GM12878 (cell line): ENCODE measurements at regions of chr6 and their contacts with region 1.

Region 1: GRCh38 chr6:149513915-149514314 is 29.1 kb upstream of the ZC3H12D start:
- DNase-seq: no peak
- ATAC-seq: no peak
- H3K4me3 ChIP-seq: no peak overlapping the region
- H3K27ac ChIP-seq: no peak overlapping the region
- H3K4me1 ChIP-seq: no peaks in the 10 kb centered on the region
- H3K27me3 ChIP-seq: no peaks in the 10 kb centered on the region
- CTCF ChIP-seq: no peak
- EP300 ChIP-seq: no peak
- POLR2A ChIP-seq: no peak
- RAD21 ChIP-seq: no peak

Region 2: DNA sequence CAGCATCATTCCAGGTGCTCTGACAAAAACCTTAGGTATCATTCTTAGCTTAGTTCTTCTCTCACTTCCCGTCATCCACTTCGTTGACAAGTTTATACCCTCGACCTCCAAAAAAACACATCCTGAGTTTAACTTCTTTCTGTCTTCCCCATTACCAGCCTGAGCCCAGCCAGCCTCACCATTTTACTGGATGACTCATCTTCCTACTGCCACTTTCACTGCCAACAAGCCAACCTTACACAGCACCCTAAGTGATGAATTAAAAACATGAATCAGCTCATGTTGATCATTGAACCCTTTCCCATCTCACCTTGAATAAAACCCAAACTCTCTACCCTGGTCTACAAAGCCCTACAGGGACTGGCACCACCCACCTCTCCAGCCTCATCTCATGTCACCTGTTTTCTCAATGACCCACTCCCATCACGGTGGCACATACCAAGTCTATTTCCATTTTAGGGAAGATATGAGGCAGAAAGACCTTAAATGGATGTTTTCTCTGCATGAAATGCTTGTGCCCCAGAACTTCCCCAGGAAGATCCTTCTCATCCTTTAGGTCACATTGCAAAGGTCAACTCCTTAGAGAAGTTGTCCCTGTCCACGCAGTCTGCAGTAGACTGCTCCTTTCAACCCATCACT is 777.0 kb before region 1 on chr6:
- CTCF ChIA-PET with region 1: no interaction called
- POLR2A ChIA-PET with region 1: no interaction called
- RAD21 ChIA-PET with region 1: no interaction called
- SMC1A ChIA-PET with region 1: no interaction called
- in situ Hi-C with region 1: no loop called
- intact Hi-C with region 1: no loop called
- DNase-seq: no peak
- ATAC-seq: peak; percentile 64
- H3K4me3 ChIP-seq: no peak overlapping the region
- H3K27ac ChIP-seq: no peak overlapping the region
- H3K4me1 ChIP-seq: no peaks in the 10 kb centered on the region
- H3K27me3 ChIP-seq: peaks cover 0 to 2% of the 10 kb centered on the region in 2 experiments; a peak in 3 of 4 replicates
- CTCF ChIP-seq: no peak
- EP300 ChIP-seq: no peak
- POLR2A ChIP-seq: no peak
- RAD21 ChIP-seq: no peak

Region 3: DNA sequence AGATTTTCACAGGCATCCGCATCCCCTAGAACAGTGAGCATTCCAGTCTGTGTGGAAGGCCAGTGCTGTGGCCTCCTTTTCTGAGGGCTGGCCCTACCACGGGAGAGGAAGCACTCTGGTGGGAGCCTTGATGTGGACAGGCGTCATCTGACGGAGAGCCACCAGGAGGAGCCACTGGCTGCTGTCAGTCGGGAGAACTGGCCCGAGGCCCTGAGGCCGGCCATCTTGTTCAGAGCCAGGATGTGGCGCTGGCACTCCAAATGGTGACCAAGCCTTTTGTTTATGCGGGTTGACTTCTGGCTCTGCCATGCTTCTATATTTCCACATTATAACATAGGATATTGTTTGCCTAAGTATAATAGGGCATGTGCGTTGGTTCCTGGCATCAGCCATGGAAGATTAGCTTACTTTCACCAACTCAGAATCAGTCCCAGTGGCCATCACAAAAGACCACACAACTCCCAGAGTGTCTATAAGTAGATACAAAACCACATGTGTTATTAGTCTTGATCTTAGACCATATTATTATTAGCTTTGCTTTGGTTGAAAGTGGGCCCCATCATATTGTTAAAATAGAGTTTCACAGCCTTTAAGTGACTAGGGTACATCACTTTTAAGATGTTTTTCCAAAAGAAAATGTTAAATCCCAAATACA is 470.3 kb before region 1 on chr6:
- CTCF ChIA-PET with region 1: interaction called, 9 read pairs
- POLR2A ChIA-PET with region 1: no interaction called
- RAD21 ChIA-PET with region 1: interaction called, 5 read pairs
- SMC1A ChIA-PET with region 1: interaction called, 11 read pairs
- in situ Hi-C with region 1: no loop called
- intact Hi-C with region 1: no loop called
- DNase-seq: no peak
- ATAC-seq: peak; percentile 43
- H3K4me3 ChIP-seq: no peak overlapping the region
- H3K27ac ChIP-seq: no peak overlapping the region
- H3K4me1 ChIP-seq: peaks cover 46% of the 10 kb centered on the region
- H3K27me3 ChIP-seq: no peaks in the 10 kb centered on the region
- CTCF ChIP-seq: peak; percentile 45 to 62 (median 45)
- EP300 ChIP-seq: no peak
- POLR2A ChIP-seq: no peak
- RAD21 ChIP-seq: peak; percentile 53; the same call in 1 of the 2 replicates

Region 4: GRCh38 chr6:149423964-149424440 is 89.9 kb before region 1 on chr6:
- CTCF ChIA-PET with region 1: interaction called, 6 read pairs
- POLR2A ChIA-PET with region 1: no interaction called
- RAD21 ChIA-PET with region 1: interaction called, 3 read pairs
- SMC1A ChIA-PET with region 1: interaction called, 18 read pairs
- in situ Hi-C with region 1: no loop called
- intact Hi-C with region 1: no loop called
- DNase-seq: no peak
- ATAC-seq: no peak
- H3K4me3 ChIP-seq: no peak overlapping the region
- H3K27ac ChIP-seq: no peak overlapping the region
- H3K4me1 ChIP-seq: peaks cover 11% of the 10 kb centered on the region
- H3K27me3 ChIP-seq: no peaks in the 10 kb centered on the region; a peak in 1 of 4 replicates
- CTCF ChIP-seq: no peak
- EP300 ChIP-seq: no peak
- POLR2A ChIP-seq: no peak
- RAD21 ChIP-seq: no peak

Region 5: DNA sequence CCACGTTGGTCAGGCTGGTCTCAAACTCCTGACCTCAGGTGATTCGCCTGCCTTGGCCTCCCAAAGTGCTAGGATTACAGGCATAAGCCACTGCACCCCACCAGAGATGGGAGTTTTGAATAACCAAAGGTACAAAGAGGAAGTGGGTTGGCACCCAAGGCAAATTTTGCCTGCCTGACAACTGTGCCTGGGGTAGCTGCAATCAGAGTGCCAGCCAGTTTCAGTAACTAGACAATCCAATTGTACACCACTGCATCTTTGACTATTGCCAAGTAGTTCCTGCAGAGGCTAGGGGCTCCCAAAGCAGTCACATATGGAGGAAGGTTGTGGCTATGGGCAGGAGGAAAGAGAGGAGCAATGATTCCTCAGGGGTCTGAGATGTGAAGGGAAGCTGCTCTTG is 45.7 kb before region 1 on chr6:
- CTCF ChIA-PET with region 1: interaction called, 50 read pairs
- POLR2A ChIA-PET with region 1: interaction called, 3 read pairs
- RAD21 ChIA-PET with region 1: interaction called, 28 read pairs
- SMC1A ChIA-PET with region 1: interaction called, 42 read pairs
- in situ Hi-C with region 1: no loop called
- intact Hi-C with region 1: loop called (anchors 2 kb)
- DNase-seq: no peak
- ATAC-seq: peak; percentile 43
- H3K4me3 ChIP-seq: peak overlapping the region; percentile 60
- H3K27ac ChIP-seq: peak overlapping the region; percentile 85
- H3K4me1 ChIP-seq: peaks cover 85% of the 10 kb centered on the region
- H3K27me3 ChIP-seq: no peaks in the 10 kb centered on the region
- CTCF ChIP-seq: no peak
- EP300 ChIP-seq: no peak
- POLR2A ChIP-seq: no peak
- RAD21 ChIP-seq: no peak

Region 6: DNA sequence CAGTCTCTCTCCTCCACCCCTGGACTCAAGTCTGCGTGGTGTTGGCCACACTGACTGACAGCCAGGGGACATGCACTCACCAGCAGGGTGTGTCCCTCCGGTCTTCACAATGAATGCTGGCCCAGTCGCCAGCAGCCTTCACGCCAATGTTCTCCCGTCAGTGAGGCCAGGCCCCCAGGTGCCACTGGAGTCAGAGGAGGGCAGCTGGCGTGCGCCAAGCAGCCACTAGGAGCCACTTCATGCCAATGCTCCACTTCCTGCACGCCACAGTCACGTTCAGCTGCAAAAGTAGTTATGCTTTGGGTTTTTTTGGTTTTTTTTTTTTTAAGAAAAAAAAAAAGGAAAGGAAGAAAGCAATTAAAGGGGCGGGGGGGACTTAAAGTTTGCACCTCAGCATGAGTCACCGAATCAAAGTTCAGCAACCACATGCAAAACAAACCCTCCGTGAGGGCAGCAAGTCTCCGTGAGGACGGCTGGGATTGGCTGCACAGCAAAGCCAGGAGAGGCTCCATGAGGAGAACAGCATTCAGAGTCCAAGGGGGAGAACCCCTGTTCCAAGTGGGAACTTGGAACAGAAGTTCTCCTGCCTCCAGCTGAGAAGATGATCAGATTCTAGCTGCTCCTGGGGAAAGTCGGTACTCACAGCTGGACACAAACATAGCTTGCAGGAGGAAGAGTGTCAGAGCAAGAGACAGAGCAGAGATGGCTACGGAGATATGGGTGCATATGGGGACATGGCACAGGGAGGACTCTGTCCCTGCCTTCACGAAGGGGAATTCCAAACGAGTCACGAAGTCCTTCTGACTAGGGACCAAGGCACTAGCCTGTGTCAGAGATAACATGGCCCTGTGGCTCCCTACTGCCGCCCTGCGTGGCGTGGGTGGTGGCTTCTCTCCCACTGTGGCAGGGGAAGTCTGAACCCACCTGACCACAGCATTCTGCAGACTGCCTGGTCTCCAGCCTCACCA is 28.9 kb before region 1 on chr6 and contains the start of gene ZC3H12D:
- CTCF ChIA-PET with region 1: interaction called, 27 read pairs
- POLR2A ChIA-PET with region 1: interaction called, 6 read pairs
- RAD21 ChIA-PET with region 1: interaction called, 36 read pairs
- SMC1A ChIA-PET with region 1: interaction called, 7 read pairs
- in situ Hi-C with region 1: no loop called
- intact Hi-C with region 1: loop called (anchors 1 kb)
- DNase-seq: no peak
- ATAC-seq: peak; percentile 65
- H3K4me3 ChIP-seq: peak within 1 kb of the TSS; percentile 71
- H3K27ac ChIP-seq: peak within 1 kb of the TSS; percentile 95
- H3K4me1 ChIP-seq: peaks cover 41% of the 10 kb centered on the region
- H3K27me3 ChIP-seq: no peaks in the 10 kb centered on the region
- CTCF ChIP-seq: peak; percentile 55 to 61 (median 56)
- EP300 ChIP-seq: peak; percentile 37 to 74; a peak in 3 of 4 replicates
- POLR2A ChIP-seq: peak; percentile 70
- RAD21 ChIP-seq: peak; percentile 45
- polyA plus RNA-seq, gene ZC3H12D: 1.4 to 2.0 TPM

Region 7: DNA sequence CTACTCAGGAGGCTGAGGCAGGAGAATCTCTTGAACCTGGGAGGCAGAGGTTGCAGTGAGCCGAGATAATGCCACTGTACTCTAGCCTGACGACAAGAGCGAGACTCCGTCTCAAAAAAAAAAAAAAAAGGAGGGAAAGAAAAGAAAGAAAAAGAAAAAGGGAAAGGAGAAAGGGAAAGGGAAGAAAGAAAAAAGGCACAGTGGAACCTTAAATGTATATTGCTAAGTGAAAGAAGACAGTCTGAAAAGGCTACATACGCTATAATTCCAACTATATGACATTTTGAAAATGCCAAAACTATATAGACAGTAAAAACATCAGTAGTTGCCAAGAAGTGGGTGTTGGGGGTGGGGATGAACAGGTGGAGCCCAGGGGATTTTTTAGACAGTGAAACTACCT is 15.7 kb after region 1 on chr6:
- CTCF ChIA-PET with region 1: interaction called, 30 read pairs
- POLR2A ChIA-PET with region 1: interaction called, 3 read pairs
- RAD21 ChIA-PET with region 1: interaction called, 5 read pairs
- SMC1A ChIA-PET with region 1: interaction called, 33 read pairs
- in situ Hi-C with region 1: no loop called
- intact Hi-C with region 1: no loop called
- DNase-seq: no peak
- ATAC-seq: no peak
- H3K4me3 ChIP-seq: no peak overlapping the region
- H3K27ac ChIP-seq: no peak overlapping the region
- H3K4me1 ChIP-seq: no peaks in the 10 kb centered on the region
- H3K27me3 ChIP-seq: no peaks in the 10 kb centered on the region
- CTCF ChIP-seq: no peak
- EP300 ChIP-seq: no peak
- POLR2A ChIP-seq: no peak
- RAD21 ChIP-seq: no peak

Region 8: GRCh38 chr6:149723771-149724417 is 210.0 kb after region 1 on chr6:
- CTCF ChIA-PET with region 1: no interaction called
- POLR2A ChIA-PET with region 1: no interaction called
- RAD21 ChIA-PET with region 1: no interaction called
- SMC1A ChIA-PET with region 1: no interaction called
- in situ Hi-C with region 1: no loop called
- intact Hi-C with region 1: no loop called
- DNase-seq: no peak
- ATAC-seq: peak; percentile 91
- H3K4me3 ChIP-seq: no peak overlapping the region
- H3K27ac ChIP-seq: no peak overlapping the region
- H3K4me1 ChIP-seq: no peaks in the 10 kb centered on the region
- H3K27me3 ChIP-seq: no peaks in the 10 kb centered on the region
- CTCF ChIP-seq: peak; percentile 73 to 76 (median 73)
- EP300 ChIP-seq: no peak
- POLR2A ChIP-seq: no peak
- RAD21 ChIP-seq: peak; percentile 68